ENCODE measurements at regions of chr5 and their contacts with region 1.

Region 1: DNA sequence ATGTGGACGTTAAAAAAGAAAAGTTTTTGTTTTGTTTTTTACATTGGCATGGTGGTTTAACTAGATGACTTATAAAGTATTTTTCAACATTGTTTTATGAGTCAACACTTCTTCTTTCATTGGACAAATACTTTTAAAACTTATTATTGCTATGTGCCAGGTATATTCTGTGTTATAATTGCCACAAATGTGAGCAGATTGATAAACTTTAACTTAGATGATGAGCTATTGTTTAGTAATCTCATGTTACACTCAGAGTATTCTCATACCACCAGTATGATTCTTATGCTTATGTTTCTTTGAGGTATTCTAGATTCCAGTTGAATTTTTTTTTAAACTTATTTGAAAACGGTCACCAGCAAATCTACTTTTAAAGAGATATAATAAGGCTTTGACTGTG is 60.3 kb downstream of the RASA1 start:
- DNase-seq: no peak
- H3K4me3 ChIP-seq: no peak overlapping the region
- H3K27ac ChIP-seq: no peak overlapping the region
- H3K4me1 ChIP-seq: no peaks in the 10 kb centered on the region
- H3K27me3 ChIP-seq: no peaks in the 10 kb centered on the region
- CTCF ChIP-seq: no peak
- POLR2A ChIP-seq: no peak

Region 2: GRCh38 chr5:87231037-87231819 is 96.8 kb before region 1 on chr5:
- CTCF ChIA-PET with region 1: no interaction called
- POLR2A ChIA-PET with region 1: no interaction called
- dilution Hi-C with region 1: no loop called
- intact Hi-C with region 1: no loop called
- DNase-seq: no peak
- H3K4me3 ChIP-seq: no peak overlapping the region
- H3K27ac ChIP-seq: no peak overlapping the region
- H3K4me1 ChIP-seq: peaks cover 5% of the 10 kb centered on the region
- H3K27me3 ChIP-seq: no peaks in the 10 kb centered on the region
- CTCF ChIP-seq: no peak
- POLR2A ChIP-seq: no peak

Region 3: DNA sequence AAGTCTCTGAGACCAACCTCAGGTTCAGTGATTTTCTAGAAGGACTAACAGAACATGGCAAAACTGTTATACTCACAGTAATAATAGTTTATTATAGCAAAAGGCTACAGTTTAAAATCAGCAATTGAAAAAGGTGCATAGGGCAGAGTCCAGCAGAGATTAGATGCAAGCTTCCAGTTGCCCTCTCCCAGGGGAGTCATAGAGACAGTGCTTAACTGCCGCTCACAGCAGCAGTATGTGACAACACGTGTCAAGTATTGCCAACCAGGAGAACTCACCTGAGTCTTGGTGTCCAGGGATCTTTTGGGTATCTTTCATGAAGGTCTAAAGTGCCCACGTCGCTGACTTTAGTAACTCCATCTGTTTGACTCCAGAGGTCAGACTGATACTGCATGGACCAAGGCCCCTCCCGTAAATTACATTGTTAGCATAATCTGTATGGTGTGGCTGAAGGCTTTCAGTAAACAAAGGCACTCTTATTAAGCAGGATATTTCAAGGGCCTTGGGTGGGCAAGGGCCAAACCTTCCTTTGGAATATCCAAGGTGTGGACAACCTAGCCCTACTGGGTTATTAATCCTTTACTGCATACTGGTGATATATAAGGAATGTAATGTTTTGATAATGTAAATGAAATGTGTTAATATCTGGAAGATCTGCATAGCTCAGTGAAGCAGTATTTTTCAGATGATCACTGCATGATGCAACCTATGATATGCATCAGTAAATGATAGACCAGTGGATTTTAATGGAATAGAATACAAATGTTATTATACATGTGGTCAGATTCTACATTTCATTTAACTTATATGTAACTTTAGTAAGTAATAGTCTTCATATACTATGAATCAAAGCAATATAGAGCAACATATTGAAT is 16.4 kb before region 1 on chr5:
- CTCF ChIA-PET with region 1: interaction called, 10 read pairs
- POLR2A ChIA-PET with region 1: no interaction called
- dilution Hi-C with region 1: no loop called
- intact Hi-C with region 1: no loop called
- DNase-seq: no peak
- H3K4me3 ChIP-seq: no peak overlapping the region
- H3K27ac ChIP-seq: no peak overlapping the region
- H3K4me1 ChIP-seq: no peaks in the 10 kb centered on the region
- H3K27me3 ChIP-seq: no peaks in the 10 kb centered on the region
- CTCF ChIP-seq: no peak
- POLR2A ChIP-seq: no peak

Region 4: GRCh38 chr5:87741881-87742280 is 413.9 kb after region 1 on chr5:
- CTCF ChIA-PET with region 1: no interaction called
- POLR2A ChIA-PET with region 1: no interaction called
- dilution Hi-C with region 1: no loop called
- intact Hi-C with region 1: no loop called
- DNase-seq: no peak
- H3K4me3 ChIP-seq: no peak overlapping the region
- H3K27ac ChIP-seq: no peak overlapping the region
- H3K4me1 ChIP-seq: no peaks in the 10 kb centered on the region
- H3K27me3 ChIP-seq: no peaks in the 10 kb centered on the region
- CTCF ChIP-seq: no peak
- POLR2A ChIP-seq: no peak